HCT116 (cell line): ENCODE measurements at regions of chr1 and their contacts with region 1.

Region 1: GRCh38 chr1:25997828-25998761 is at the start of gene PAFAH2:
- DNase-seq: peak; percentile 100
- ATAC-seq: peak; percentile 99
- H3K4me3 ChIP-seq: peak within 1 kb of the TSS; percentile 89 to 95
- H3K27ac ChIP-seq: peak within 1 kb of the TSS; percentile 65
- H3K4me1 ChIP-seq: peaks cover 9 to 17% of the 10 kb centered on the region in 2 experiments; a peak in 3 of 4 replicates
- H3K27me3 ChIP-seq: no peaks in the 10 kb centered on the region
- CTCF ChIP-seq: peak; percentile 93 to 98 (median 96)
- POLR2A ChIP-seq: peak; percentile 46
- RAD21 ChIP-seq: peak; percentile 100
- total RNA-seq, gene PAFAH2: 13.0 TPM

Region 2: DNA sequence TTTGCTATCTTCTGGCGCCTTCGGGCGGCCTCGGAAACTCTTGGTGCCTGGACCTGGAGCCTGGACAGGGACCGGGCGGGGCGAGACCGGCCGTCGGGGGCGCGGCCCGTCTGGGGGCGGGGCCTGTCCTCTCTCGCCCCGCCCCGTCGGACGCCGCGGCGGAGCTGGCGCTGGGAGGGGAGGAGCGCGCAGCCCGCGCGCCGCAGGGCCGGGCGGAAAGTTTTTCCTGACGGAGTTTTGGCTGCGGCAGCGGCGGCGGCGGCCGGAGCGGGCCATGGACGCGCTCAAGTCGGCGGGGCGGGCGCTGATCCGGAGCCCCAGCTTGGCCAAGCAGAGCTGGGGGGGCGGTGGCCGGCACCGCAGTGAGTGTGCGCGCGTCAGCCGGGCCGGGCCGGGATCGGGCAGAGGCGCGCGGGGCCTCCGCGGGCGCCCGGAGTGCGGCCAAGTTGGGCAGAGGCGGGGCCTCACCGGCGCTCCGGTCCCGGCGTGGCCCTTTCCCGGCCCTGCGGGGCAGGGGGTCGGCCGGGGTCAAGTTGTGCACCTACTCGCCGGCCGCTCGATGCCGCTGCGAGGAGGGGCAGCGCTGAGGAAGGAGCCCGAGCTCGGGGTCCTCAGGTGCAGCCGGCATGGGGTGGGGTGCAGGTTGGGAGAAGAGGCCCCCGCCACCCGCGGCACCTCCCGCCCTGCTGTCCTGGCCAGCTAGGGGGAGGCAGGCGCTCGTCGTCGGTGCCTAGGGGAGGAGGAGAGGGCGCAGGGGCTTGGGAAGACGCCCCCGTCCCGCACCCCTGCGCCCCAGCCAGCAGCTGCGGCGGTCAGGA is 454.5 kb before region 1 on chr1 and contains the start of gene LDLRAP1:
- CTCF ChIA-PET with region 1: no interaction called
- POLR2A ChIA-PET with region 1: no interaction called
- RAD21 ChIA-PET with region 1: no interaction called
- intact Hi-C with region 1: loop called (anchors 10 kb)
- DNase-seq: no peak
- ATAC-seq: peak; percentile 91
- H3K4me3 ChIP-seq: peak within 1 kb of the TSS; percentile 61 to 86
- H3K27ac ChIP-seq: peak within 1 kb of the TSS; percentile 83
- H3K4me1 ChIP-seq: peaks cover 21 to 38% of the 10 kb centered on the region in 2 experiments
- H3K27me3 ChIP-seq: no peaks in the 10 kb centered on the region
- CTCF ChIP-seq: no peak
- POLR2A ChIP-seq: no peak
- RAD21 ChIP-seq: no peak; the same call in none of the 2 replicates
- total RNA-seq, gene LDLRAP1: 26.0 TPM

Region 3: DNA sequence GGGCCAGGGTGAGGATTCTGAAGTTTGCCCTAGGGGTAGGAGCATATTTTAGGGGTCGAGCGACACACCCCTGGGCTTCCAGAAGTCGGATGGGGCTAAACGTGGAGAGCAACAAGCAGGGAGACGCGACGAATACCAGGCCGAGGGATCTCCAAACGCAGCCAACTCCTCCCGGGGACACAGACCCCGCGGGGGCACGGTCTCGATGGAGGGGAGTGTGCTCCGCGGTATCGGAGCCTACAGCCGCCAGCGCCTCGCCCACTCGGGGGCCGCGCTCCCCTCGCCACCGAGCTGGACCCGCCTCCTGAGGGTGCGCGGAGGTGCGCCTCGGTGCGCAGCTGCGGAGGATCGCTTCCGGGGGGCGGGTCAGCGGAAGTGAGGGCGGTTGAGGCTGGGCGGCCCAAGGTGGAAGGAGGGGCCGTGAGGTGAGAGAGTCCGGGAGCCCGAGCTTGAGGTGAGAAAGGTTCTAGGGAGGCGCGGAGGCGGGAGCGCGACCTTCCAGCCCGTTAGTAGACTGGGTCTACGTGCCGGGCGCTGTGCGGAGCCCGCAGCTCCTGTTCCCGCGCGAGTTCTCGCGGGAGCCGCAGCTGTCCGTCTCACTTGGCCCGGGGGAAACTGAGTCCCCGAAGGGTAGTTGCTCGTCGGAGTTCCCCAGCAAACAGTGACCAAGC is 178.4 kb before region 1 on chr1 and contains the start of gene MTFR1L:
- CTCF ChIA-PET with region 1: interaction called, 5 read pairs
- POLR2A ChIA-PET with region 1: interaction called, 4 read pairs
- RAD21 ChIA-PET with region 1: no interaction called
- intact Hi-C with region 1: loop called (anchors 2 kb)
- DNase-seq: peak; percentile 39
- ATAC-seq: peak; percentile 88
- H3K4me3 ChIP-seq: peak within 1 kb of the TSS; percentile 90 to 92
- H3K27ac ChIP-seq: peak within 1 kb of the TSS; percentile 81
- H3K4me1 ChIP-seq: peaks cover 18 to 33% of the 10 kb centered on the region in 2 experiments; a peak in 3 of 4 replicates
- H3K27me3 ChIP-seq: no peaks in the 10 kb centered on the region
- CTCF ChIP-seq: no peak
- POLR2A ChIP-seq: peak; percentile 46
- RAD21 ChIP-seq: no peak
- total RNA-seq, gene MTFR1L: 35.8 TPM

Region 4: DNA sequence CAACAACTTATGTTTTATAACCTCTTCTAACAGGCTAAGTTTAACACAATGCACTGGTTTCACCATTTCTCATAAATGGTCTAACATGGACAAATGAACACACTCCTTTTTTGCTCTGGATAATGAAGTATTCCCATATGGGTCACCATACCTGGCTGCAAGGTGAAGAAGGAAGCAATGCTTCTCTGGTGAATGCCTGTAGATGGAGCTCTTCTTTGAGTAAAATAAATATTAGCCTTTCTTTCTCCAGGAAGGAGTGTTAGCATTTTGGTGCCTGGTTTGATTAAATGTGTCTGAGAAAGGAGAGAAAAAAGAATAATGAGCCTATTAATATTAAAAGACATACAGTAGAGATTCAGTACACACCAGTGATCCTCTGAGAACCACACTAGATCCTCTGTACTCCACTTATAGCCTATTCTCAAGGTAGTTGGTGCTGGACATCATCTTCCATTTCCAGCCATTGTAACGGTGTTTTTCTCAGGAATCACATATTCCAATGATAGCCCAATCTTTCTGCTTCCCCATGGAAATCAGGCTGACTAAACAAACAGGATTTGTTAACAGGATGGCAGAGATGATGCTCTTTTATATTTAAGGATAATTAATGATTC is 160.7 kb before region 1 on chr1:
- CTCF ChIA-PET with region 1: interaction called, 7 read pairs
- POLR2A ChIA-PET with region 1: no interaction called
- RAD21 ChIA-PET with region 1: no interaction called
- intact Hi-C with region 1: loop called (anchors 1 kb)
- DNase-seq: no peak
- ATAC-seq: peak; percentile 88
- H3K4me3 ChIP-seq: no peak overlapping the region
- H3K27ac ChIP-seq: no peak overlapping the region
- H3K4me1 ChIP-seq: peaks cover 0 to 3% of the 10 kb centered on the region in 2 experiments; a peak in 1 of 4 replicates
- H3K27me3 ChIP-seq: no peaks in the 10 kb centered on the region
- CTCF ChIP-seq: peak; percentile 69 to 70 (median 70)
- POLR2A ChIP-seq: no peak
- RAD21 ChIP-seq: peak; percentile 82

Region 5: GRCh38 chr1:25895365-25895993 is 102.6 kb before region 1 on chr1:
- CTCF ChIA-PET with region 1: interaction called, 47 read pairs
- POLR2A ChIA-PET with region 1: interaction called, 12 read pairs
- RAD21 ChIA-PET with region 1: interaction called, 7 to 12 read pairs
- intact Hi-C with region 1: loop called (anchors 1 kb)
- DNase-seq: peak; percentile 73
- ATAC-seq: peak; percentile 70
- H3K4me3 ChIP-seq: no peak overlapping the region
- H3K27ac ChIP-seq: peak overlapping the region; percentile 24
- H3K4me1 ChIP-seq: peaks cover 44 to 61% of the 10 kb centered on the region in 2 experiments
- H3K27me3 ChIP-seq: no peaks in the 10 kb centered on the region
- CTCF ChIP-seq: peak; percentile 97 to 99 (median 98)
- POLR2A ChIP-seq: no peak
- RAD21 ChIP-seq: peak; percentile 97